ENCODE measurements at regions of chr6 and their contacts with region 1.

Region 1: DNA sequence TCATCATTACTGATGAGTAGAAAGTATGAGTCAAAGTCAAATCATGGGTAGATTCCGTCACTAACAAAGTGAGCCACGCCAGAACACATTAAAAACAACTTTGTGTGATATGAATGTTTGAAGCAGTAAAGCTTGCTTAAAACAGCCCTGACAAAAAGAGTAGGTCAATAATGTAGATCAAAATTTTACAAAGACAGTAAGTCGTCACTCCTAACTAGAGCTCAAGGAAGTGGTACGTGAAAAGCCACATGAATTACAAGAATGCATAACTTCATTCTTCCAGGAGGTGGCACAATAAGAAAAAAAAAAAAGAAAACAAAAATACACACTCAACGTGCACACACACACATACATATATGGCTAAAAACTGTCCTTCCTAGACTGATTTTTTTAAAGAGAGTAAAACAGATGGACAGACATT is 69.9 kb downstream of the HACE1 start:
- DNase-seq: peak in 15 of 35 experiments; percentile 1 to 64 (median 12)
- ATAC-seq: peak; percentile 75 to 99 (median 86)
- H3K4me3 ChIP-seq: no peak overlapping the region
- H3K4me3 Mint-ChIP-seq: peak overlapping the region in 2 of 3 donors; percentile 19 to 47
- H3K27ac ChIP-seq: no peak overlapping the region
- H3K27ac Mint-ChIP-seq: peak overlapping the region; percentile 82 to 88
- H3K4me1 ChIP-seq: peaks cover 0 to 16% of the 10 kb centered on the region in 2 experiments
- H3K4me1 Mint-ChIP-seq: peaks cover 23 to 25% (median 24%) of the 10 kb centered on the region in 3 donors
- H3K27me3 ChIP-seq: no peaks in the 10 kb centered on the region
- H3K27me3 Mint-ChIP-seq: no peaks in the 10 kb centered on the region

Region 2: DNA sequence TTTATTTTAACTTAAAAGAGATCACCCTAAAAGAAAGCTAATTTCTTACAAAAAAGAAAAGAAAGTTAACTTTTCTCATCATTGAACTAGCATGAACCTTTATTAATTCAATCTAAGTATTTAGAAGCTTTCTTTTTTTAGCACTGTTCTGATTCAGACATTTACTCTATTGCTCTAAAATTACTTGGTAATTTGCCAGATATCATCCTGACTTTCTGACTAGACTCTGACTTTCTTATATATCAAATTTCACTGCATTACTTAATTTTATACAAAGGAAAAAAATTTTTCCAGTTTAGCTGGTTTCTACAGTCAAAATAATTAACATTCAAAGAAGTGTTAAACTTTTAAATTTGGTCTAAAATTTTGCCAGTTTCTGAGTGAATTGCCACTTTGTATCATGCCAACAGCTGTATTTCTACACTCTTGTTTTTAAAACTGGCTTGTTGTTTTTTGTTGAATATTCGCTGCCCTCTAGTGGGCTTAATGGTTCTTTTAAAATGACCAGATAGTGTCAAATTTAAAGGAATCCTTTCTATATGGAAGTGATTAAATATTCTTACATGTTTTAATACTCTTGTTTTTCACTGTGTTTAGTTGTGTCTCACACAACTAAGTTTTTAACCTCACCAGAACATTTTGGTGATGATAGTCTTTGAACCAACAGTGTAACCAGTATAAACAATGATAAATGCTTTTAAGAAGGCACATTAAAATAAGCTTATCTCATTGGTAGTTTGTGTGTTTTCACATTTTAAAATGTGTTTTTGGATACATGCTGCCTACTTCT is 288.0 kb after region 1 on chr6:
- CTCF ChIA-PET with region 1: interaction called in 1 of 2 experiments, 12 read pairs
- POLR2A ChIA-PET with region 1: no interaction called
- DNase-seq: peak in 1 of 35 experiments; percentile 17
- ATAC-seq: no peak
- H3K4me3 ChIP-seq: no peak overlapping the region
- H3K4me3 Mint-ChIP-seq: no peak overlapping the region
- H3K27ac ChIP-seq: no peak overlapping the region
- H3K27ac Mint-ChIP-seq: no peak overlapping the region
- H3K4me1 ChIP-seq: no peaks in the 10 kb centered on the region
- H3K4me1 Mint-ChIP-seq: no peaks in the 10 kb centered on the region
- H3K27me3 ChIP-seq: peaks cover 0 to 4% of the 10 kb centered on the region in 2 experiments
- H3K27me3 Mint-ChIP-seq: peaks cover 11 to 13% of the 10 kb centered on the region in 2 donors

Measured in T-cell (primary cell).